Activated CD8-positive, alpha-beta T cell treated with anti-CD3 and anti-CD28 coated beads, Interleukin-2, amount 10 ng/mL, durations not matched to agents 7 days and 5 days (primary cell): ENCODE measurements at regions of chr1 and their contacts with region 1.

Region 1: GRCh38 chr1:205983925-205984725 is 19.1 kb downstream of the RAB7B start:
- DNase-seq: peak; percentile 46
- ATAC-seq: peak; percentile 63
- H3K4me3 Mint-ChIP-seq: no peak overlapping the region
- H3K27ac Mint-ChIP-seq: no peak overlapping the region
- H3K4me1 Mint-ChIP-seq: no peaks in the 10 kb centered on the region
- H3K27me3 Mint-ChIP-seq: peaks cover 5% of the 10 kb centered on the region

Region 2: DNA sequence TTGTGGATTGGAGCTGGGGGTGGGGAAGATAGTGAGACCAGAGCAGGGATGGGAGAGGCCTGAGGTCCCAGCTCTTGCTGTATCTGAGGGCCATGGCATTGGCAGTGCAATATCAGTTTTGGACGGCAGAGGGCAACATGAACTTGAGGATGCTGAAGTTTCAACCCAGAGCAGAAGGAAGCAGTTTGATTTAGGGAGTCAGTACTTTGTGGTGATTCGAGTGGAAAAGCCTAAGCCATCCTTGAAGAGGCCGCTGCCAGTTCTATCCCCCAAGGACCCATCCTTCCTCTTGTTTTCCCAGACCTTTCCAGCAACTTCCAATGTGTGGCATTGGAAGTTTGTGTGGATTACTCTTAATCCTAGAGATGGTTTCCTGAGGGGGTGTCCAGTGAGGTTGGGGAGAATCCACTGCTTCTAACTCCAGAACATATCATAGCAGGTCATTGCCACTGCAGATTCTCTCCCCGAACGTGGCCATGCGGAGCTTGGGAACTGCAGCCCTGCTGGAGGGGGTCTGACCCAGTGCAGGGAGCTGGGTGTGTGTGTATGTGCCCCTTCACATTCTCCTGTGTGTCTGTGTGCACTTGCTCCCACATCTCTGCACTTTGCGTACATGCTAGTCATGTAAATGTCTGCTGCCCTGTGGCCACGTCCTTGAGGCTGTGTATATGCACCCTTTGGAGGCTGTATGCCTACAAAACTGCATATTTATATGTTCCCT is 64.9 kb before region 1 on chr1:
- CTCF ChIA-PET with region 1: interaction called, 13 read pairs
- POLR2A ChIA-PET with region 1: no interaction called
- DNase-seq: peak; percentile 80
- ATAC-seq: peak; percentile 81
- H3K4me3 Mint-ChIP-seq: no peak overlapping the region
- H3K27ac Mint-ChIP-seq: no peak overlapping the region
- H3K4me1 Mint-ChIP-seq: peaks cover 8% of the 10 kb centered on the region
- H3K27me3 Mint-ChIP-seq: peaks cover 4% of the 10 kb centered on the region

Region 3: DNA sequence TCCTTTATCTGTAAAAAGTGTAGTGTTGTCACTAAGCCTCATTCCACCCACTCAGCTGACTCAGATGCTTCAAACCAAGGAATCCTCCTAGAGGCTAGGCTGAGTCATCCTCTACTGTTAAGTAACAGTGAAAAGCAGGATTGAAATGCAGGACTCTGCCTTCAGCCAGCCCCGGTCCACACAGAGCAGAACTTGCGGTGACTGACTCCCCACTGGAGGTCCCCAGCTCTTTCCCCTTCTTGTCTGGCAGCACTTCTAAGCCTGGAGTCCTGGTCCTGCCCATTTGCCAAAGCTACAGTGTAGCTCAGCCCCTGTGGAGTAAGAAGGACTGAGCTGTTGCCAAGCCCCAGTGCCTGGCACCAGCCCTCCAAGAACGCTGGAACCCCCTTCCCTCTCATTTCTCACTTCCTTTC is 17.4 kb after region 1 on chr1:
- CTCF ChIA-PET with region 1: interaction called, 24 read pairs
- POLR2A ChIA-PET with region 1: no interaction called
- DNase-seq: no peak
- ATAC-seq: no peak
- H3K4me3 Mint-ChIP-seq: no peak overlapping the region
- H3K27ac Mint-ChIP-seq: no peak overlapping the region
- H3K4me1 Mint-ChIP-seq: no peaks in the 10 kb centered on the region
- H3K27me3 Mint-ChIP-seq: peaks cover 13% of the 10 kb centered on the region